Activated T-helper 2 cell treated with anti-CD3 and anti-CD28 coated beads, Interferon-gamma antibody, Interleukin-2, Interleukin-4, amounts not matched to agents 10 μg/mL and 5 μg/mL and 100 μg/mL, durations not matched to agents 14 hours and 24 hours and 36 hours (primary cell): ENCODE measurements at regions of chr12 and their contacts with region 1.

Region 1: DNA sequence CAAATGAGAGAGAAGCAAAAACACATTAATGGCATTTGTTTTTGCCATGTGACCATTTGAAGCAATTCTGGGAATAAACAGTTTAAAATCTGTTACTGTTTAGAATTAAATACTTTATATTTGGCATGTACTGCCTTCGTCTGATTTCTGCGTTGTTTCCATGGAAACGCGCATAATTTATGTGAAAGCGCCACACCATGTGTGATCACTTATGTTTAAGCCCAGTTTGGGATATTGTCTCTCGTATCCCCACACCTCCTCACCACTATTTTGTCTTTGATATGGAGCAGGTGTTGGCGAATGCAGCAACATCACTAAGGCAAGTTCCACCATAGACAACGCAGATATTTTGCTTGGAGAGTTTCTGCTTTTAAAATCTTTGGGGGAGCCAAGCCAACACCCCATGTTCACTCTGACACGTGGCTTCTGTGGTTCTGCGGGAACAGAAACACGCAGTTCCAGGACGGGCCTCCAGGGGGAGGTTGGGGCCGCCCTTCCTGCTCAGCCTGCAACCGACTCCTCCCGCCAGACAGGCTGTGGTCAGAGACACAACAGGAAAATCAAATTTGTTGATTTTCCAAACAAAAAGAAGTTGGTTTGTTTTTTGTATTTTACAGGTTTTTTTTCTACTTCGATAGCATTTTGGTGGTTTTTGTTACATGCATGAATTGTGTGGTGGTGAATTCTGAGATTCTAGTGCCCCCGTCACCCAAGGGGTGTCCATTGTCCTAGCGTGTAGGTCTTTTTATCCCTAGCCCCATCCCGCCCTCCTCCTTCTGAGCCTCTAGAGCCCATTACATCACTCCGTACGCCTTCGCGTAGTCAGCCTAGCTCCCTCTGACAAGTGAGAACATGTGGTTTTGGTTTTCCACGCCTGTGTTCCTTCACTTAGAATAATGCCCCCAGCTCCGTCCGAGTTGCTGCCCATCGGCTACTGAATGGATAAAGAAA is 101.9 kb upstream of the SFSWAP start:
- DNase-seq: peak; percentile 46
- H3K4me3 Mint-ChIP-seq: no peak overlapping the region
- H3K27ac Mint-ChIP-seq: peak overlapping the region; percentile 17
- H3K4me1 Mint-ChIP-seq: peaks cover 51% of the 10 kb centered on the region
- H3K27me3 Mint-ChIP-seq: peaks cover 2% of the 10 kb centered on the region

Region 2: DNA sequence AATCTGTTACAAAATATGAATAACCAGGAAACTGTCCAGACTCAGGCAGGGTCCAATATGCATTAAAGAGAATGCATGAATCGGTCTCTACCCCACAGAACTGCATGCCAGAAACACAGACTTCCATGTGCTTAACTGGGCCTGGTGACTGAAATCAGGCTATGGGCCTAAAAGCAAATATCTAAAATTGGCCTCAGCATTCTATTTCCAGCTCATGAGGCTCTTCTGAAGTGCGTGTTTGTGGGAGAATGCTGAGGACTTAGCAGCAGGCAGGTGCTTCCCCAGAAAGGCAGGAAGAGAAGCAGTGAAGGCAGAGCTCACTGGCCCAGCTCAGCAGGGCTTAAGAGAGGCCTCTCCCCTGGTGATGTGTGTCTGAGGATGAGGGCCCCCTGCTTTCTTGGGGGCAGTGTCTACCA is 606.8 kb before region 1 on chr12:
- intact Hi-C with region 1: no loop called
- DNase-seq: no peak
- H3K4me3 Mint-ChIP-seq: no peak overlapping the region
- H3K27ac Mint-ChIP-seq: no peak overlapping the region
- H3K4me1 Mint-ChIP-seq: no peaks in the 10 kb centered on the region
- H3K27me3 Mint-ChIP-seq: no peaks in the 10 kb centered on the region

Region 3: GRCh38 chr12:131092901-131093603 is 516.0 kb before region 1 on chr12:
- intact Hi-C with region 1: loop called (anchors 5 kb)
- DNase-seq: peak; percentile 27
- H3K4me3 Mint-ChIP-seq: peak overlapping the region; percentile 49
- H3K27ac Mint-ChIP-seq: peak overlapping the region; percentile 50
- H3K4me1 Mint-ChIP-seq: peaks cover 24% of the 10 kb centered on the region
- H3K27me3 Mint-ChIP-seq: no peaks in the 10 kb centered on the region

Region 4: DNA sequence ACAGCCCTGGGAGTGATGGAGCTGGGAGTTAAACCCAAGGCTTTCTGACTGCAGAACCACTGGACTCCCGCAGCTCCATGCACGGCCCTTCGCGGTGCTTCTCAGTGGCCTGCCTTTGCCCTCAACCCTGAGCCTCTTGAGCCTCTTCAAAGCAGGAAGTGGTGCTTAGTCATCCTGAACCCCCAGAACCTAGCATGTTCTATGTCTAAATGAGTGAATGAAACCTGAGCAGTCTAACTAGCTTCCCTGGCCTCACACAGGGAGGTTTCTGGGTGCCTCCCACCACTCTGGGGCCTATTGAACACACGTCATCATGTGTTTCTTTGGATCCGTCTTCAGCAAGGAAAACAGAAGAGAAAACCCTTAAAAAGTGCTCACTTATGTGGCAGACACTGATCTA is 16.0 kb before region 1 on chr12:
- intact Hi-C with region 1: loop called (anchors 1 kb)
- DNase-seq: peak; percentile 22
- H3K4me3 Mint-ChIP-seq: no peak overlapping the region
- H3K27ac Mint-ChIP-seq: peak overlapping the region; percentile 70
- H3K4me1 Mint-ChIP-seq: peaks cover 24% of the 10 kb centered on the region
- H3K27me3 Mint-ChIP-seq: peaks cover 2% of the 10 kb centered on the region

Region 5: DNA sequence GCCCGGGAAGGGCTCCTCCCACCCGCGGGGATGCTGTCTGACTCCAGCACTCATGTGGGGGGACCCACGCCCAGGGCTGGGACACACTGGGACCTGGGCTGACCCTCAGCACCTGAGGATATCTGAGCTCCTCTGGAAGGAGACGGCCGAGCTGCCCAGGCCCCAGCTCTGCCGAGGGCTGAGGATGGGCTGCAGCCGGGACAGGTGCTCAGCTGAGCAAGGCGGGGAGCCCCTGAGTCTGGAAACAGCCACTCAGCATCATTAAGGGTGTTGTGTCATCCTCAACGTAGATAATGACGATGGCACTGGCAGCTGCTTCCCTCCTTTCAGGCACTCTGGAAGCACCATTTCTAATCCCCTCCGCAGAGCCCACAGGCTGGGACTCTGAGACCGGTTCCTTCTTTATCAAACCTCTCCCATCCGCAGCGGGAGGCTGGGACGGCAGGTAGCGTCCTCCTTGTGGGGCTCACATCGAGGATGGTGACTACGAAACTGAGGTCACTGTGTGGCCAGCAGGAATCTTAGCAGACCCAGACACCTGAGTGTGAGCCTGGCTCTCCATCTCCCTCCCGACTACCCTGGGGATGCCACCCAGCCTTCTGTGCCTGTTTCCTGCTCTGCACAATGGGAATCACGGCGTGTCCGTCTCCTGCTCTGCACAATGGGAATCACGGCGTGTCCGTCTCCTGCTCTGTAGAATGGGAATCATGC is 75.2 kb after region 1 on chr12:
- intact Hi-C with region 1: loop called (anchors 10 kb)
- DNase-seq: no peak
- H3K4me3 Mint-ChIP-seq: no peak overlapping the region
- H3K27ac Mint-ChIP-seq: no peak overlapping the region
- H3K4me1 Mint-ChIP-seq: peaks cover 16% of the 10 kb centered on the region
- H3K27me3 Mint-ChIP-seq: no peaks in the 10 kb centered on the region

Region 6: DNA sequence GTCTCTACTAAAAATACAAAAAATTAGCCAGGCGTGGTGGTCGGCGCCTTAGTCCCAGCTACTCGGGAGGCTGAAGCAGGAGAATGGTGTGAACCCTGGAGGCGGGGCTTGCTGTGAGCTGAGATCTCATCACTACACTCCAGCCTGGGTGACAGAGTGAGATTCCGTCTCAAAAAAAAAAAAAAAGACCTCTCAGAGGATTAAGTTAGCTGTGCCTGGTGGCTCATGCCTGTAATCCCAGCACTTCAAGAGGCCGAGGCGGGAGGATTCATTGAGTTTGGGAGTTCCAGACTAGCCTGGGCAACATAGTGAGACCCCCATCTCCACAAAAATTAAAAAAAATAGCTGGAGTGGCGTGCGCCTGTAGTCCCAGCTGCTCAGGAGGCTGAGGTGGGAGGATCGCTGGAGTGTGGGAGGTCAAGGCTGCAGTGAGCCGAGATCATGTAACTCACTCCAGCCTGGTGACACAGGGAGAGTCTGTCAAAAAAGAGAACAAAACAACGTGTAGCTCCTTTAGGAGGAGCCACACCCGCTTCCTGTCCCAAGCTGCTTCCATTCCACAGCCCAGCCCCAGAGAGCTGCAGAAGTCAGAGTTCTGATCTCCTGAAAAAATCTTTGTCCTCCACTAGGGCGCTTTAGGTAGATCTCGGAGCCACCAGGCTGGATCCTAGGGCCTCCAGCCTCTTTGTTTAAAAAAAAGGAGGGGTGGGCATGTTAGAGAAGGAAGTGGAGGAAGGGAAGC is 273.9 kb after region 1 on chr12:
- intact Hi-C with region 1: no loop called
- DNase-seq: no peak
- H3K4me3 Mint-ChIP-seq: no peak overlapping the region
- H3K27ac Mint-ChIP-seq: no peak overlapping the region
- H3K4me1 Mint-ChIP-seq: no peaks in the 10 kb centered on the region
- H3K27me3 Mint-ChIP-seq: no peaks in the 10 kb centered on the region

Region 7: DNA sequence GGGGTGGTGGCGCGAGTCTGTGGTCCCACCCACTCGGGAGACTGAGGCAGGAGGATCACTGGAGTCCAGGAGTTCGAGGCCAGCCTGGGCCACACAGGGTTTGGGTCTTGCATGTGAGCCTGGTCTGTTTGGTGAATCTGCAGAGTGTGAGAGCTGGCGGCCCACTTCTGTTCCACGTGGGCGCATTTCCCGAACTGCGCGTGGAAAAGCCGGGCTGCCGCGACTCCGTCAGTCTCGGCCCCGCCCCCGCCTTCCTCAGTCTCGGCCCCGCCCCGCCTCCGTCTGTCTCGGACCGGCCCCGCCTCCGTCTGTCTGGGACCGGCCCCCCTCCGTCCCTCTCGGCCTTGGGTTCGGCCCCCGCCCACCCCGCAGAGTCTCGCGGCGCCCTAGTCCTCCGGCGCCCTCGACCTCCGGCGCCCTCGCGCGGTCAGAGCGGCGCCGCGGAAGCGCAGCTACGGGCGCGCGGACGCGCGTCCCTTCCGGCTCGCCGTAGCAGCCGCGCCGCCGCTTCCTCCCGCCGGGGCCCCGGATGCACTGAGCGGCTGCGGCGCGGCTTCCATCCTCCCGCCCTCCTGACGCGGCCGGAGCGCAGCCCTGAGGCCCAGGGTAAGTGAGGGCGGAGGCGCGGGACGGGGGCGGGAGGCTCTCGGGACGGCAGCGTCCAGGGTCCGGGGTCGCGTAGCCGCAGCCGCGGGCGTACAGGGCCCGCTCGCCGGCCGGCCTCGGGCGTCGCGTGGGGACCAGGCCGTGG is 340.6 kb after region 1 on chr12 and contains the start of gene EP400:
- intact Hi-C with region 1: loop called (anchors 5 kb)
- DNase-seq: peak; percentile 89
- H3K4me3 Mint-ChIP-seq: peak within 1 kb of the TSS; percentile 89
- H3K27ac Mint-ChIP-seq: peak within 1 kb of the TSS; percentile 85
- H3K4me1 Mint-ChIP-seq: peaks cover 23% of the 10 kb centered on the region
- H3K27me3 Mint-ChIP-seq: no peaks in the 10 kb centered on the region
- total RNA-seq, gene EP400: 57.7 and 58.0 TPM in 2 replicates

Region 8: DNA sequence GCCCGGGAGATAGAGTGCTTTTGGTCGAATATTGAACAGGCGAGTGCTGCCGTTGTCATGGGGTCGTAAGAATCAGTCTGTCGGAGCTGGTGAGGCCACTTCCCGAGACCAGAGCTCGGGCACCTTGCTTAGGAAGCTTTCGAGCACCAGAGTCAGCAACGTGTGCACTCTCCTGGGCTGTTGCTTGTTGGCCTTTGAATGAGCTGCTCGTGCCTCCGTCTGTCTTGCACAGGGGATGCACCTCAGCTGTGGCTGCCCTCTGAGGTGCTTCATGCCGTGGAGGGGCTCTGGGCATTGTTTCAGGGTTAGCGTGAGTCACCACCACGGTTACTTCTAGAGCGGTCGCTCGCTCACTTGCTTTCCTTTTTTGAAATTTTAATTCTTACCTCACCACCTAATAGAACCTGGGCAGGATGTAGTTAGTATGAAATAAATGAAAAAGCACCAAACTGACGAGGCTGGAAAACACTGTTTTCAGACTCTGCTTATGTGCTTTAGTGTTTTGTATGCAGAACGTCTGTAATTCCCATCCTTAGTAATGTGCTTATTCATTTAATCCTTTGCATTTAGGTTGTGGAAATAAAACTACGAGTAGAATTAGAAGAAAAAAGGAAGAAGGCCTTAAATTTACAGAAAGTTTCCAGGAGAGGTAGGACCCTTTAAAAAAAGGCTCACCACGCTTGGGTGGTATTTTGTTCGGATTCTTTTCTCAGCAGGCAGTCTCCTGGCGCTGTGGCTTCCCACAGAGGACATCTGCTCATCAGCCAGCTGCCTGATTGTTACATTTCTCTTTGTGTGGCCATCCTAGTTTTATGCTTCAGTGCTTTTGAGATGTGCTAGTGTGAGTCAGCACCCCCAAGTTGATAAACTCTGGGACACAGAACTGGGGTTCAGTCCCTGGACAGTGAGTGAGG is 381.3 kb after region 1 on chr12:
- intact Hi-C with region 1: no loop called
- DNase-seq: no peak
- H3K4me3 Mint-ChIP-seq: no peak overlapping the region
- H3K27ac Mint-ChIP-seq: no peak overlapping the region
- H3K4me1 Mint-ChIP-seq: no peaks in the 10 kb centered on the region
- H3K27me3 Mint-ChIP-seq: no peaks in the 10 kb centered on the region

Region 9: GRCh38 chr12:132305991-132306884 is 697.2 kb after region 1 on chr12:
- intact Hi-C with region 1: no loop called
- DNase-seq: no peak
- H3K4me3 Mint-ChIP-seq: no peak overlapping the region
- H3K27ac Mint-ChIP-seq: no peak overlapping the region
- H3K4me1 Mint-ChIP-seq: no peaks in the 10 kb centered on the region
- H3K27me3 Mint-ChIP-seq: no peaks in the 10 kb centered on the region